Activated CD4-positive, alpha-beta memory T cell treated with anti-CD3 and anti-CD28 coated beads for 36 hours (primary cell): ENCODE measurements at regions of chr5 and their contacts with region 1.

Region 1: DNA sequence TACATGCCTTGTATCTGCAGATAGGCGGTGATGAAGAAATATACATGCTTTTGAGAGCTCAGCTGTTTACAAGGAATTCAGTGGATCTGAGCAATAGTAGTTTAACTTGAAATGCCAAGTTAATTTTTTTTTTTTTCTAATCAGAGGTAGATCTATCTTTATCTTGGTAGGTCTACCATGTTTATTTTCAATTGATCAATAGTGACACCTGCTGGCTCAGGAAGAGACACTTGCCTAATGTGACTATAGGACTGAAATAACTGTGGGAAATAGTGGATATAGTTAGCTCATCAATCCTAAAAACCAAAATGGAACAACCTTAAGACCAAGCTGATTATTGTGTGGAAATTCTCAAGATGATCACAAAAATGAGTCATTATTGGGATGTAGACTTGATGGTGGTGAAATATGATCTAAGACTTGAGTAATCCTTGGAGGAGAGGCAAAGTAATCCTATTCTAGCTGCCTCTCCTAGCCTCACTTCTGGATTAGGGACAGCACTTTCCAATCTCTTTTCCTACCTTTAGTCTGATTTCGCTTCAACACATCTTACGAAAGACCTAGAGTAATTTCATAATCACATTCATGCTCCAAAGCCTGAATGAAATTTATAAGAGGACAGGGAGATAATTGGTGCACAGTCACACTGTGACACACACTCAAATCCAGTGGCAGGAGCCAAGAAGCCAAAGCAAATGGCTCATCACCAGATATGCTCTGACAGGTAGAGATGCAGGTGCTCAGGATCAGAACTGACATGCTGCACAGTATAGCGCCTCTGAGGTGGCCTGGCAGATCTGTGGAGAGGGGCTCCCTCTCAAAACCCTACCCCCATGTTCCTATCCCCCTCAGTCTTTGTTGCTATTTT is 156.3 kb downstream of the HMHB1 start:
- DNase-seq: no peak
- H3K4me3 Mint-ChIP-seq: no peak overlapping the region
- H3K27ac Mint-ChIP-seq: no peak overlapping the region
- H3K4me1 Mint-ChIP-seq: no peaks in the 10 kb centered on the region
- H3K27me3 Mint-ChIP-seq: peaks cover 15% of the 10 kb centered on the region

Region 2: GRCh38 chr5:142922223-142922952 is 1045.9 kb before region 1 on chr5:
- CTCF ChIA-PET with region 1: no interaction called
- POLR2A ChIA-PET with region 1: no interaction called
- intact Hi-C with region 1: loop called (anchors 2 kb)
- DNase-seq: no peak
- H3K4me3 Mint-ChIP-seq: no peak overlapping the region
- H3K27ac Mint-ChIP-seq: no peak overlapping the region
- H3K4me1 Mint-ChIP-seq: peaks cover 28% of the 10 kb centered on the region
- H3K27me3 Mint-ChIP-seq: no peaks in the 10 kb centered on the region

Region 3: DNA sequence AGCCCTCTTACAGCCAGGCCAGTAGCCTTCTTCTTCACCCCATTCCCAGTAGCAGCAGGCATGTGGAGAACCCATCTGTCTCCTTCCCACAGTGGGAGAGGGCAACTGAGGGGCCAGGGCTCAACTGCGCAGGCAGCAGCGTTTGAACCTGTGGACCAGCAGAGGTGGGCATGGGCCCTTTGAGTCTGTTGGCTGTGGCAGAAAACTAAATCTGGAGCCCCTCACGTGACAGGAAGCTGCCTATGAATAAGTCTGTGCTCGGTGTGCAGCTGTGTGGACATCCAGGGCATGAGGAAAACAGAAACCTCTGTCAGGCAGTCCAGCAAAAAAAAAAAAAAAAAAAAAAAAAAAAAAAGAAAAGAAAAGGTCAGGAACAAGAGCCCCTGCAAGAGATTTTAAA is 375.6 kb before region 1 on chr5:
- CTCF ChIA-PET with region 1: no interaction called
- POLR2A ChIA-PET with region 1: no interaction called
- intact Hi-C with region 1: no loop called
- DNase-seq: peak; percentile 41
- H3K4me3 Mint-ChIP-seq: no peak overlapping the region
- H3K27ac Mint-ChIP-seq: no peak overlapping the region
- H3K4me1 Mint-ChIP-seq: peaks cover 39% of the 10 kb centered on the region
- H3K27me3 Mint-ChIP-seq: peaks cover 1% of the 10 kb centered on the region